Activated CD4-positive, alpha-beta T cell treated with anti-CD3 and anti-CD28 coated beads, Interleukin-2, amount 10 ng/mL, durations not matched to agents 24 days and 14 days (primary cell): ENCODE measurements at regions of chr18 and their contacts with region 1.

Region 1: DNA sequence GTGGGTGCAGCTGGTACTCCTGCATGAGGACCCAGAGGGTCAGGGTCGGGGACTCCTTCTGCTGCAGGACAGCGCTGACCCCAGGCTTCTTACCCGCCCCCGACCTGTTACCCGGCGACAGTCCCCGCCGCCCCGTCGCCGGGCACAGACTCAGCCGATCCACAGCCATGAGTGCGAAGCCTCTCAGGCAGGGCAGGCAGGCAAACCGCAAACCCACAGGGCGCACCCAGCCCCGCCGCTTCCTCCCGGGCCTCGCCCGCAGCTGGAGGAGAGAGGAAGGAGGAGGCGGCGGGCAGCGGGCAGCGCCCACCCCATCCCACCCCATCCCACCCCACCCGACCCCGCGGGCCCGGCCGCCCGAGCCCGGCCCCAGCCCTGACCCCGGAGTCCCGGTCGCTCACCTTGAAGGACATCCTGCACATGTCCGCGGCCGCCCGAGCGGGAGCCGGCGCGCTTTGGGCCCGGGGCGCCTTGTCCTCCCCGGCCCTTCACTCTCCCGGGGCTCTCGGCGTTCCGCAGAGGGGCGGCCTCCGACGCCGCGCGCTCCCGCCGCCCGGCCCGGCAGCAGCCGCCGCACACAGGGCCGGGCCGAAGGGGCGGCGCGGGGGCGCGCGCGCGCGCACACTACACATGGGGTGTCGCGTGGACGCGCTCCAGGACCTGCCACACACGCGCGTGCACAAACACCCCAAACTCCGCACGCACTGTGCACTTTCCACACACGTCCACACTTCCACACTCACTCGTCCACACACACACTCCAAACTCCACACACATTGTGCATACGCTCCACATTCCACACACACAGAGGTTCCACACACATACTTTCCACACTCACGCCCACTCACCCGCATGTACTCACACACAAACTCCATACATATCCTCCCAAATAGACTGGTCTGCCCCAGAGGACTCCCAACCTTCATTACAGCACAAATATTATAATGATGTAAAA is at the start of gene ANKRD29:
- DNase-seq: peak; percentile 88
- H3K4me3 Mint-ChIP-seq: peak within 1 kb of the TSS; percentile 80
- H3K27ac Mint-ChIP-seq: peak within 1 kb of the TSS; percentile 32
- H3K4me1 Mint-ChIP-seq: peaks cover 19% of the 10 kb centered on the region
- H3K27me3 Mint-ChIP-seq: peaks cover 73% of the 10 kb centered on the region
- total RNA-seq, gene ANKRD29: not detected in 2 replicates

Region 2: GRCh38 chr18:23629444-23629946 is 33.1 kb before region 1 on chr18:
- intact Hi-C with region 1: loop called (anchors 5 kb)
- DNase-seq: peak; percentile 59
- H3K4me3 Mint-ChIP-seq: no peak overlapping the region
- H3K27ac Mint-ChIP-seq: no peak overlapping the region
- H3K4me1 Mint-ChIP-seq: peaks cover 10% of the 10 kb centered on the region
- H3K27me3 Mint-ChIP-seq: peaks cover 12% of the 10 kb centered on the region

Region 3: DNA sequence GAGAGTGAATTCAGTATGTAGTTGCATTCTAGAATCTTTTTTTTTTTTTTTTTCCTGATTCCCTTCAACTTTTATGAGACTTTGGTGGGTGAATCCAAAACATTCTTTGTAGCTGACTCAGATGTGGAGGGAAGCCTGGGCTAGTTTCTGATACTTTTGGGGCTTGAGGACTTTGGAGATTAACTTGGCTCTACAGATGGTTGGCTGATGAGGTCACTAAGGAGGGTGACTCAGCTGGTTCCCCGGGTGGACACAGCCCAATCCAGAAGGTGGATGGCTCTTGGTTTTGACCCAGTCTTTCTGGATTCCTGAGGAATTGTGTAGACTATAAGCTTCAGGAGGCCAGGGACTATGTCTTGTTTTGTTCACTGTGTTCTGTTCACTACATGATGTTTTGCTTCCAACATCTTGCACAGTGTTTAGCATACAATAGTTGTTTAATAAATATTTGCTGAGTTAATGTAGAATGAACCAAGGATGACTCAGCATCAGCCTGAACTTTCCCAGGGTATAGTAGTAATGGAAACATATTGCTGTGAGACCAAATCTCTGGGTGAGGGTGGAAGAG is 57.1 kb after region 1 on chr18:
- intact Hi-C with region 1: loop called (anchors 10 kb)
- DNase-seq: no peak
- H3K4me3 Mint-ChIP-seq: no peak overlapping the region
- H3K27ac Mint-ChIP-seq: no peak overlapping the region
- H3K4me1 Mint-ChIP-seq: peaks cover 3% of the 10 kb centered on the region
- H3K27me3 Mint-ChIP-seq: peaks cover 45% of the 10 kb centered on the region